ENCODE measurements at regions of chr19 and their contacts with region 1.

Region 1: DNA sequence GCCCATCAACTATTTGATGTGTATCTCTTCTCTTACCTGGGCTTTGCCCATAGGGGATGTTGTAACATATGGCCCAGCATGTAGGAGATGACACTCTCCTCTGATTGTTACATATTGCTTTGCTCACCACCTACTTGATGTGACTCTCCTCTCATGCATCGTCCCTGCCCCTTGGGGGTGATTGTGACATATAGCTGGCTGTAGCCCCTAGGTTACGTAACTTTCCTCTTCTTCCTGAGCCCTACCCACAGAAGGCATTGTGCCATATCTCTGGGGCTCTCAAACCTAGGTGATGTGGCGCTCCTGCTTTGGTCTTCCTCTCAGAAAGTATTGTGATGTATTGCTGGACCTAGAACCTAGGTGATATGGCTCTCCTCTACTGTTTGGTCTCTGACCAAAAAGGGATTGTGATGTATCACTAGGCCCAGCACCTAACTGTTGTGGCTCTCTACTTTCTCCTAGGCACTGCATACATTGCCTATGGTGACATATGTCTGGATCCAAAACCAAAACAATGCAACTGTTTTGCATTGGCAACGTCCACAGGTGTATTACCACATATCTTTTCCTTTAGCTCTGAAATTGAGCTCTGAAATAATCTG is 71.9 kb upstream of the ZNF724 start:
- DNase-seq: no peak
- ATAC-seq: no peak
- H3K4me3 ChIP-seq: no peak overlapping the region
- H3K4me3 Mint-ChIP-seq: no peak overlapping the region
- H3K27ac ChIP-seq: no peak overlapping the region
- H3K27ac Mint-ChIP-seq: no peak overlapping the region
- H3K4me1 ChIP-seq: no peaks in the 10 kb centered on the region
- H3K4me1 Mint-ChIP-seq: no peaks in the 10 kb centered on the region
- H3K27me3 ChIP-seq: no peaks in the 10 kb centered on the region
- H3K27me3 Mint-ChIP-seq: no peaks in the 10 kb centered on the region
- CTCF ChIP-seq: no peak

Region 2: GRCh38 chr19:23470873-23471545 is 149.0 kb after region 1 on chr19:
- CTCF ChIA-PET with region 1: no interaction called
- POLR2A ChIA-PET with region 1: no interaction called
- intact Hi-C with region 1: loop called in 1 of 2 experiments (anchors 1 kb)
- DNase-seq: no peak
- ATAC-seq: no peak
- H3K4me3 ChIP-seq: no peak overlapping the region
- H3K4me3 Mint-ChIP-seq: no peak overlapping the region
- H3K27ac ChIP-seq: no peak overlapping the region
- H3K27ac Mint-ChIP-seq: no peak overlapping the region
- H3K4me1 ChIP-seq: no peaks in the 10 kb centered on the region
- H3K4me1 Mint-ChIP-seq: no peaks in the 10 kb centered on the region
- H3K27me3 ChIP-seq: peaks cover 0 to 7% of the 10 kb centered on the region in 2 experiments
- H3K27me3 Mint-ChIP-seq: peaks cover 29% of the 10 kb centered on the region
- CTCF ChIP-seq: no peak

Measured in CD8-positive, alpha-beta T cell (primary cell).